ENCODE measurements at regions of chr3 and their contacts with region 1.

Region 1: DNA sequence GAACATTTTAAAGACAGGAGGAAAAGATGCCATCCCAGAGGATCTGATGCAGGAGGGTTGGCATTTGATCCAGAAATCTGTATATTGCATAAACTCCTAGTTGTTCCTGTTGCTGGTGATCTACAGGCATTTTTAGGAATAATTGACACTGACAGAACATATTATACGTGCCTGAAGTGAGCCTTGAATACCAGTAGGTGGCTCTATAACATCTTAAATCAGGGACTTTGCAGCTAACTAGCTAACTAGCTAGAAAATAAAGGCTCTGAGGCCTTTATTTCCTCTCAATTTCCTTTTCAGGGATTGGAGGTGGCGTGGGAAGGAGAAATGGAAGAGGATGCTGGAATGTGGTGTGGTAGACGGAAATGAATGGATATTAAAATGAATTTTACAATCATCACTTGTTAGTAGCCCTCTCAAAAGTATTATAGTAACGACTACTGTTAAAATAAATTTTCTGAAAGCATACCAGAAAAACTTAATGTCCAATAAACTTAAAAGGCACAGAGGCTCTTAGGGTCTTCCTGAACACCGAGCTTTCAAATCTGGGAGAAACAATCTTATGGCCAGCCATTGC is 73.9 kb upstream of the ZBED2 start:
- DNase-seq: no peak
- H3K4me3 Mint-ChIP-seq: no peak overlapping the region
- H3K27ac Mint-ChIP-seq: peak overlapping the region; percentile 76
- H3K4me1 Mint-ChIP-seq: peaks cover 87% of the 10 kb centered on the region
- H3K27me3 Mint-ChIP-seq: no peaks in the 10 kb centered on the region

Region 2: DNA sequence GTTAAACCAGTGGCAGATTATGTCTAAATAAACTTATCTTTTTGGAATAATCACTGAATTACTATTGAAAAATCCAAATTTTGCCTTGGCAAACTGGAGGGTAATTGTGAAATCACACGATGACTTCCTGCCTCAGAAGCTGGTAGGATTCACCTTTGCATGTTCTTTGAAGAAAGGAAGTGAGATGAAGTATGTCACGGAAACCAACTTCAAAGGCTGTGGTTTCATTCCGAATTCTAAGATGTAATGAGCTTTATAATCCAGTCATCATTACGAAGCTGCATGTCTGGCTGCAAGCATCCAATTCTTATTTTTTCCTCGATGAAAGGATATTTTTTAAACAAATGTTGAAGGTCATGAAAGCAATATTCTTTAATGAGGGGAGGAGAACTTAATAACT is 58.8 kb before region 1 on chr3:
- CTCF ChIA-PET with region 1: interaction called, 6 read pairs
- intact Hi-C with region 1: loop called (anchors 1 kb)
- DNase-seq: peak; percentile 71
- H3K4me3 Mint-ChIP-seq: peak overlapping the region; percentile 56
- H3K27ac Mint-ChIP-seq: peak overlapping the region; percentile 97
- H3K4me1 Mint-ChIP-seq: peaks cover 94% of the 10 kb centered on the region
- H3K27me3 Mint-ChIP-seq: no peaks in the 10 kb centered on the region

Region 3: GRCh38 chr3:111700054-111700453 is 31.1 kb after region 1 on chr3:
- CTCF ChIA-PET with region 1: interaction called, 16 read pairs
- intact Hi-C with region 1: loop called (anchors 1 kb)
- DNase-seq: no peak
- H3K4me3 Mint-ChIP-seq: no peak overlapping the region
- H3K27ac Mint-ChIP-seq: peak overlapping the region; percentile 50
- H3K4me1 Mint-ChIP-seq: peaks cover 31% of the 10 kb centered on the region
- H3K27me3 Mint-ChIP-seq: no peaks in the 10 kb centered on the region

Region 4: GRCh38 chr3:111761309-111761831 is 92.4 kb after region 1 on chr3:
- CTCF ChIA-PET with region 1: interaction called, 3 read pairs
- intact Hi-C with region 1: loop called (anchors 1 kb)
- DNase-seq: peak; percentile 54
- H3K4me3 Mint-ChIP-seq: no peak overlapping the region
- H3K27ac Mint-ChIP-seq: peak overlapping the region; percentile 68
- H3K4me1 Mint-ChIP-seq: peaks cover 18% of the 10 kb centered on the region
- H3K27me3 Mint-ChIP-seq: no peaks in the 10 kb centered on the region

Region 5: DNA sequence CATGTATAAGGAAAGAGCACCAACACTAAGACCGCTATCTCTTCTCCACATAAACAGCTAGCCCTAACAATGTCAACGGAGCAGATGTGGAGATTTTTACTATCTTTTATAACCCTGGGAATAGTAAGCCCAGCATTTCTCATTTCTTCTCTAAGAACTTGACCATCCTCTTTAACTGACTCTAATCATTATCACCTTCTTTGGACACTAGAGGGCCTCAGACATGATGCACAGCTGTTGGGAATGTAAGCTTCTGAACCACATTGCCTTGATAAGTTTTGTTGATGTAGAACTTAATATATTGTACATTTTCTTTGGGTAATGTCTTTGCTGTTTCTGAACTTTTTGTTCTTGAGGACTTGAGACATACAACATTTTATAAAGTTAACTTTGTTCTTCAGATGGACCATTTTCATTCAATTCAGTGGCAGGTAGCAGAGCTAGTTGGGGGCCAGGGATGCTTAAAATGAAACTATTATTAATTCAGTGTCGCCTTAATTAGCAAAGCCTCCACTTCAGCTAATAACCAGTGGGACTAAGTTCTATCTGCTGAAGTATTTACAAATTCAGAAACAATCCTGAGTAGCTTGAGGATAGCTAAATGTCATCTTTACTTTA is 320.2 kb after region 1 on chr3:
- CTCF ChIA-PET with region 1: interaction called, 12 read pairs
- intact Hi-C with region 1: no loop called
- DNase-seq: no peak
- H3K4me3 Mint-ChIP-seq: no peak overlapping the region
- H3K27ac Mint-ChIP-seq: no peak overlapping the region
- H3K4me1 Mint-ChIP-seq: peaks cover 27% of the 10 kb centered on the region
- H3K27me3 Mint-ChIP-seq: no peaks in the 10 kb centered on the region

Region 6: GRCh38 chr3:112043603-112044201 is 374.7 kb after region 1 on chr3:
- CTCF ChIA-PET with region 1: interaction called, 12 read pairs
- intact Hi-C with region 1: loop called (anchors 1 kb)
- DNase-seq: peak; percentile 64
- H3K4me3 Mint-ChIP-seq: no peak overlapping the region
- H3K27ac Mint-ChIP-seq: no peak overlapping the region
- H3K4me1 Mint-ChIP-seq: peaks cover 3% of the 10 kb centered on the region
- H3K27me3 Mint-ChIP-seq: no peaks in the 10 kb centered on the region

Measured in activated naive CD4-positive, alpha-beta T cell treated with anti-CD3 and anti-CD28 coated beads for 36 hours (primary cell).